ENCODE measurements at regions of chr3 and their contacts with region 1.

Region 1: GRCh38 chr3:68173012-68173634 is 518.7 kb upstream of the SUCLG2 start:
- DNase-seq: no peak
- H3K4me3 ChIP-seq: no peak overlapping the region
- H3K27ac ChIP-seq: no peak overlapping the region
- H3K4me1 ChIP-seq: no peaks in the 10 kb centered on the region
- H3K27me3 ChIP-seq: no peaks in the 10 kb centered on the region
- CTCF ChIP-seq: no peak
- EP300 ChIP-seq: no peak
- POLR2A ChIP-seq: no peak

Region 2: DNA sequence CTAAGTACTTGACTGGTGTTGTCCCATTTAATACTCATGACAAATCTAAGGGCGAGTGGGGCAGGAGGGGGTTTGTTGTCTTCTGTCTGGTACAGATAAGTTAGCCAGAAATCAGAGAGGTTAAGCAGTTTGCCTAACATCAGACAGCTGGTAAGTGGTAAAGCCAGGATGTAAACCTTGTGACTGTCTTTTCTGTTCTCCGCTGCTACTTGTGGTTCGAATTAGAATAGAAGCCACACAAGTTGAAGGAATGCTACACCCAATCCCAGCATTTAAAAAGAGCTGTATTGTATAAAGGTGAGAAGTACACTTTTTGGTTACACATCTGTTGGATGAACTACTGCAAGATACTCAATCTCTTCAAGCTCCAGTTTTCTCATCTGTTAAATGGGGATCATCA is 44.1 kb before region 1 on chr3:
- in situ Hi-C with region 1: no loop called
- intact Hi-C with region 1: loop called (anchors 1 kb)
- DNase-seq: no peak
- H3K4me3 ChIP-seq: no peak overlapping the region
- H3K27ac ChIP-seq: no peak overlapping the region
- H3K4me1 ChIP-seq: no peaks in the 10 kb centered on the region
- H3K27me3 ChIP-seq: no peaks in the 10 kb centered on the region
- CTCF ChIP-seq: no peak
- EP300 ChIP-seq: no peak
- POLR2A ChIP-seq: no peak

Region 3: DNA sequence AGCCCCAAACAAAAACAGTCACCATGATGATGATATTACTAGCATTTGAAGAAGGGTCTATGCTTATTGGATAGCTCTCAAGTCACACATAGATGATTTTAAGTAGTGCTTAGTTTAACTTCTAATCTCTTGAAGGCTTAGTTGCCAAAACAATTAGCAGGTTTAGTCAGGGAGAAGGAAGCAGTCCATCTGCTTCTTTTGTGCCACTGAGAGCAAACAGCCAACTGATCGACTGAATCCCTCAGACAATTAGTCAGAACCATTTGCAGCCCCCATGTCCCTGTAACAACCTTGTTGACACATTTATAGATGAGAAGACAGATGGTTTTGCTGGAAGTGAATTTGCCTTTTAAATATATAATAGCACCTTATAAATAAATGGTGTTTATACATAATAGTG is 66.4 kb after region 1 on chr3:
- in situ Hi-C with region 1: no loop called
- intact Hi-C with region 1: no loop called
- DNase-seq: no peak
- H3K4me3 ChIP-seq: no peak overlapping the region
- H3K27ac ChIP-seq: no peak overlapping the region
- H3K4me1 ChIP-seq: no peaks in the 10 kb centered on the region
- H3K27me3 ChIP-seq: no peaks in the 10 kb centered on the region
- CTCF ChIP-seq: no peak
- EP300 ChIP-seq: no peak
- POLR2A ChIP-seq: no peak

Region 4: GRCh38 chr3:68436619-68437401 is 263.7 kb after region 1 on chr3:
- in situ Hi-C with region 1: no loop called
- intact Hi-C with region 1: no loop called
- DNase-seq: no peak
- H3K4me3 ChIP-seq: no peak overlapping the region
- H3K27ac ChIP-seq: no peak overlapping the region
- H3K4me1 ChIP-seq: no peaks in the 10 kb centered on the region
- H3K27me3 ChIP-seq: no peaks in the 10 kb centered on the region
- CTCF ChIP-seq: no peak
- EP300 ChIP-seq: no peak
- POLR2A ChIP-seq: no peak

Region 5: GRCh38 chr3:68485051-68485450 is 311.9 kb after region 1 on chr3:
- in situ Hi-C with region 1: no loop called
- intact Hi-C with region 1: no loop called
- DNase-seq: no peak
- H3K4me3 ChIP-seq: no peak overlapping the region
- H3K27ac ChIP-seq: no peak overlapping the region
- H3K4me1 ChIP-seq: no peaks in the 10 kb centered on the region
- H3K27me3 ChIP-seq: no peaks in the 10 kb centered on the region
- CTCF ChIP-seq: no peak
- EP300 ChIP-seq: no peak
- POLR2A ChIP-seq: no peak

Measured in transverse colon (tissue), 4 donors.